K562 (cell line): ENCODE measurements at regions of chr5 and their contacts with region 1.

Region 1: DNA sequence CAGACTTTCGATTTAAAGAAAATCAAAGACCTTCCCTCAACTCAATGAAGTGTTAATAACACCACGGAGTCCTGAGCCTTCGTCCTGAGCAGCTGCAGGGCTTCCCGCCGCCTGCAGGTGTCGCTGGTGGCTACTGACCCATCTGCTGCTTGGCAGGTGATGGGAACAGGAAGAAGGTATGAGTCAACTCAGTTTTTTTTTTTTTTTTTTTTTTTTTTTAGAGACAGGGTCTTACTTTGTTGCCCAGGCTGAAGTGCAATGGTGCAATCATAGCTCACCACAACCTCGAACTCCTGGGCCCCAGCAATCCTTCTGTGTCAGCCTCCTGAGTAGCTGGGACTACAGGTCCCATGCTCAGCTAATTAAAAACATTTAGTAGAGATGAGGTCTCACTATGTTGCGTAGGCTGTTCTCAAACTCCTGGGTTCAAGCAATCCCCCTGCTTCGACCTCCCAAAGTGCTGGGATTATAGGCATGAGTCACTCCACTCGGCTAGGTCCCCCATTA is 185.7 kb upstream of the IL12B start:
- DNase-seq: peak; percentile 58 to 75 (median 68)
- ATAC-seq: peak; percentile 96
- H3K4me3 ChIP-seq: no peak overlapping the region
- H3K27ac ChIP-seq: no peak overlapping the region
- H3K4me1 ChIP-seq: no peaks in the 10 kb centered on the region
- H3K27me3 ChIP-seq: peaks cover 4 to 6% of the 10 kb centered on the region in 2 experiments; a peak in 1 of 5 replicates
- CTCF ChIP-seq: peak; percentile 76 to 88 (median 84)
- EP300 ChIP-seq: 0 out of 2 replicates have a peak, but pooled peaks have one; percentile 5
- POLR2A ChIP-seq: no peak
- RAD21 ChIP-seq: peak; percentile 76 to 81

Region 2: DNA sequence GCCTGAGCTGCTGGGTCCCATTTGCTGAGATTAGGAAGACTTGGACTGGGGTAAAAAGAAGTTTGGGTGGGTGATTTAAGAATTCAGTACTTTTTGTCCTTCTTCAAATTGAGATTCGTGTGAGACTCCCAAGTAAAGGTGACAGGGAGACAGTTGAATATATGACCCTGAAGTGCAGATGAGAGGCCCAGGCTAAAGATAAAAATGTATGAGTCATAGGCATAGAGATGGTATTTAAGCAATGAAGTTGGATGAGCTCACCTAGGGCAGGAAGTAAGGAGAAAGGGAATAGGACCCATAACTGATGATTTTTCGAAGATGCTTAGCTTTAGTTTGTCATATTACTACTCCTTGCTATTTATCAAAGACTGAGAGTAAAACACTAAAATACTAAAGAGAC is 144.4 kb after region 1 on chr5:
- CTCF ChIA-PET with region 1: no interaction called
- POLR2A ChIA-PET with region 1: no interaction called
- in situ Hi-C with region 1: no loop called
- intact Hi-C with region 1: loop called (anchors 10 kb)
- DNase-seq: peak in 1 of 4 experiments; percentile 11
- ATAC-seq: peak; percentile 80
- H3K4me3 ChIP-seq: no peak overlapping the region
- H3K27ac ChIP-seq: no peak overlapping the region
- H3K4me1 ChIP-seq: peaks cover 0 to 6% of the 10 kb centered on the region in 2 experiments; a peak in 2 of 5 replicates
- H3K27me3 ChIP-seq: no peaks in the 10 kb centered on the region; a peak in 1 of 5 replicates
- CTCF ChIP-seq: no peak
- EP300 ChIP-seq: peak; percentile 72
- POLR2A ChIP-seq: no peak
- RAD21 ChIP-seq: no peak

Region 3: GRCh38 chr5:159682623-159683022 is 166.7 kb after region 1 on chr5:
- CTCF ChIA-PET with region 1: no interaction called
- POLR2A ChIA-PET with region 1: no interaction called
- in situ Hi-C with region 1: no loop called
- intact Hi-C with region 1: loop called (anchors 2 kb)
- DNase-seq: no peak
- ATAC-seq: no peak
- H3K4me3 ChIP-seq: no peak overlapping the region
- H3K27ac ChIP-seq: no peak overlapping the region
- H3K4me1 ChIP-seq: no peaks in the 10 kb centered on the region
- H3K27me3 ChIP-seq: no peaks in the 10 kb centered on the region
- CTCF ChIP-seq: peak in 1 of 3 experiments; percentile 16; a peak in 1 of 6 replicates
- EP300 ChIP-seq: no peak
- POLR2A ChIP-seq: no peak
- RAD21 ChIP-seq: peak in 1 of 2 experiments; percentile 73; a peak in 3 of 4 replicates

Region 4: DNA sequence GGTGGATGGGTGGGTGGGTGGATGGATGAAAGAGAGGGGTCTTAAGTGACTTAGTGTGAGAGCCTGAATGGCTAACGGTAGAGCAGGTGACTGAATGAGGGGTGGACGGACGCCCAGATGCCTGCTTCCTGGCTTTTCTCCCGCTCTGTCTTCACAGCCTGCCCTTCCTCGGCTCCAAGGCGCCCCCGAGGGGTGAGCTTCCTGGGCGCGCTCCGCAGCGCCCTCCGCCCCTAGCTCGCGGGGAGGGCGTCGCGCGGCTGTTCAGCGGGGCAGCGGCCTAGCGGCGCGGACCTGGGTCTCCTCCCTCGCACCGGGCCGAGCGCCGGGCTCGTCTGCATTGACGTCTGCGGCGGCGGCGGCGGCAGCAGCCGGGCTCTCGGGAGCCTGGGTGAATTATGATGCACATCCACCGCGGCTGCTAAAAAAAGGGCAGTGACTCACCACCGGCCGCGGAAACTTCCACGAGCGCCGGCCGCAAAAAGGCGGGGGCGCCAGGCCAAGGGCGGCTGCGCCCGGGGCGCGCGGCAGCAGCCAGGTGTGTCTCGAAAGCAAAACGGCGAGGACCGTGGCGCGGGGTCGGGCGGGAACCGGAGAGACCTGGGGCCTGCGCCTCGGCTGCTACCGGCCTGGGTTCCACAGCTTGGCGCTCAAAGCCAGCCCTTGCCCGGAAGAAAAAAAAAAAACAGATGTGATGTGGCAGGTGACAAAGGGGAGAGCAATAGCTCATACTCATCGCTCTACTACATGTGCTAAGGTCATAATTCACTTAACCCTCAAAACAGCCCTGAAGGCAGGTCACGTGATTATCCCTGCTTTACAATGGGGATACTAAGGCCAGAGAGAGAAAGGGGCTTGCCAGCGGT is 257.3 kb after region 1 on chr5:
- CTCF ChIA-PET with region 1: no interaction called
- POLR2A ChIA-PET with region 1: no interaction called
- in situ Hi-C with region 1: no loop called
- intact Hi-C with region 1: loop called (anchors 10 kb)
- DNase-seq: peak; percentile 45 to 61 (median 50)
- ATAC-seq: peak; percentile 94
- H3K4me3 ChIP-seq: peak overlapping the region; percentile 29
- H3K27ac ChIP-seq: no peak overlapping the region
- H3K4me1 ChIP-seq: peaks cover 0 to 12% of the 10 kb centered on the region in 2 experiments; a peak in 3 of 5 replicates
- H3K27me3 ChIP-seq: peaks cover 9 to 30% of the 10 kb centered on the region in 2 experiments; a peak in 4 of 5 replicates
- CTCF ChIP-seq: peak; percentile 31 to 75 (median 61); a peak in 5 of 6 replicates
- EP300 ChIP-seq: no peak
- POLR2A ChIP-seq: no peak
- RAD21 ChIP-seq: peak; percentile 58 to 75

Region 5: GRCh38 chr5:159915904-159916840 is 400.2 kb after region 1 on chr5 and contains the start of gene ADRA1B:
- CTCF ChIA-PET with region 1: no interaction called
- POLR2A ChIA-PET with region 1: no interaction called
- in situ Hi-C with region 1: no loop called
- intact Hi-C with region 1: loop called (anchors 5 kb)
- DNase-seq: peak; percentile 21 to 77 (median 67)
- ATAC-seq: peak; percentile 94
- H3K4me3 ChIP-seq: no peak within 1 kb of the TSS
- H3K27ac ChIP-seq: no peak within 1 kb of the TSS
- H3K4me1 ChIP-seq: peaks cover 0 to 4% of the 10 kb centered on the region in 2 experiments; a peak in 1 of 5 replicates
- H3K27me3 ChIP-seq: peaks cover 13 to 34% of the 10 kb centered on the region in 2 experiments; a peak in 3 of 5 replicates
- CTCF ChIP-seq: peak in 2 of 3 experiments; percentile 55 to 58; a peak in 4 of 6 replicates
- EP300 ChIP-seq: no peak
- POLR2A ChIP-seq: no peak
- RAD21 ChIP-seq: peak; percentile 66 to 84
- polyA plus RNA-seq, gene ADRA1B: not detected

Region 6: DNA sequence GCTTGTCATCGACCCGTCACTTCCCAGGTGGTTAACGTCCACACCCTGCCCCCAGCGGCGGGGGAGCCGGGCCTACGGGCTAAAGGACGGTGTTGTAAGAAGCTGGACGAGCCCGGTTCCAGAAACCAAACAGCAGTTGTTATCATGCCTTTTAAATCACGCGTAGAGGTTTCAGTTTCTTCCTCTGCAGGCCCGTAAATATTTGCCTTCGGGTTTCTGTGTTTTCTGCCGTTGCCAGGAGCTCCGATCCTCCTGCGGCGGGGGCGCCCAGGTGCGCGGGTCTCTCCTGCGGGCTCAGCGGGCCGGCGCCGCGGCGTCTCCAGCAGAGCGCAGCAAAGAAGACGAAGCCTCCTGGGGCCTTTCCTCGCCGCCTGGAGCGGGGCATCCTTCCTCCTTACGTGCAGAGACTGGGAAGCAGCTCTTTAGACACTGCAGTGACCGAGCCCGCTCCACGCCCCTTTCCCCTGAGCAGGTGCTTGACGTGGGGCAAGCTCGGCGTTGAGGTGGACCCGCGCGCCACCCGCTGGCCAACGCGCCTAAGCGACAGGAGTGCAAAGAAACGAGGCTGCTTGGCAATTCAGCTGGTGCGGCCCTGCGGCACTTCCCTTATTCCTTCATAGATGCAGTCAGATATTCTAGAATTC is 471.2 kb after region 1 on chr5:
- CTCF ChIA-PET with region 1: no interaction called
- POLR2A ChIA-PET with region 1: no interaction called
- in situ Hi-C with region 1: no loop called
- intact Hi-C with region 1: loop called (anchors 5 kb)
- DNase-seq: peak; percentile 63 to 70 (median 67)
- ATAC-seq: peak; percentile 99
- H3K4me3 ChIP-seq: no peak overlapping the region
- H3K27ac ChIP-seq: no peak overlapping the region
- H3K4me1 ChIP-seq: peaks cover 0 to 8% of the 10 kb centered on the region in 2 experiments; a peak in 2 of 5 replicates
- H3K27me3 ChIP-seq: peaks cover 10 to 43% of the 10 kb centered on the region in 2 experiments; a peak in 4 of 5 replicates
- CTCF ChIP-seq: peak; percentile 62 to 74 (median 66); a peak in 5 of 6 replicates
- EP300 ChIP-seq: no peak
- POLR2A ChIP-seq: no peak
- RAD21 ChIP-seq: peak; percentile 63 to 81